K562 (cell line): ENCODE measurements at regions of chr2 and their contacts with region 1.

Region 1: GRCh38 chr2:156253765-156254164 is 78.8 kb downstream of the NR4A2 start:
- DNase-seq: no peak
- ATAC-seq: peak; percentile 88
- H3K4me3 ChIP-seq: peak overlapping the region; percentile 47
- H3K27ac ChIP-seq: peak overlapping the region; percentile 63; the same call in 1 of the 3 replicates
- H3K4me1 ChIP-seq: no peaks in the 10 kb centered on the region; a peak in 1 of 5 replicates
- H3K27me3 ChIP-seq: no peaks in the 10 kb centered on the region
- CTCF ChIP-seq: no peak
- EP300 ChIP-seq: no peak
- POLR2A ChIP-seq: no peak
- RAD21 ChIP-seq: no peak

Region 2: DNA sequence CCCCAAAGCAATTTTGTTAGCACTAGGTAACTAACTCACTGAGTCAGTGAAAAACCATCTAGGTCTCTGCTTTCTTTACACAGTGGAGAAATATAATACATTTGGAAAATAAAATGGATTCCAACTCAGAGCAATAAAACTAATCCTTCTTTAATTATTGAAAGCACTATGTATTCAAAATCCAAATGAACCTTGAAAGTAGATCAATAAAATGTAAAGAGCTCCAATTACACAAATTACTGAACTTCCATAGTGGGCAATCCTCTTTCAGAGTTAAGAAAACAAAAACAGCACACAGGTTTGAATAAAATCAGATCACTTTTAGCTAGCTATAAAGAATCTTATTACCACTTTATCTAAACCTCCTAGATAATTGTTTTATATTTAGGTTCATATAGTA is 129.3 kb before region 1 on chr2:
- CTCF ChIA-PET with region 1: no interaction called
- POLR2A ChIA-PET with region 1: no interaction called
- in situ Hi-C with region 1: no loop called
- intact Hi-C with region 1: no loop called
- DNase-seq: no peak
- ATAC-seq: no peak
- H3K4me3 ChIP-seq: no peak overlapping the region
- H3K27ac ChIP-seq: no peak overlapping the region
- H3K4me1 ChIP-seq: no peaks in the 10 kb centered on the region
- H3K27me3 ChIP-seq: no peaks in the 10 kb centered on the region
- CTCF ChIP-seq: no peak
- EP300 ChIP-seq: no peak
- POLR2A ChIP-seq: no peak
- RAD21 ChIP-seq: no peak

Region 3: DNA sequence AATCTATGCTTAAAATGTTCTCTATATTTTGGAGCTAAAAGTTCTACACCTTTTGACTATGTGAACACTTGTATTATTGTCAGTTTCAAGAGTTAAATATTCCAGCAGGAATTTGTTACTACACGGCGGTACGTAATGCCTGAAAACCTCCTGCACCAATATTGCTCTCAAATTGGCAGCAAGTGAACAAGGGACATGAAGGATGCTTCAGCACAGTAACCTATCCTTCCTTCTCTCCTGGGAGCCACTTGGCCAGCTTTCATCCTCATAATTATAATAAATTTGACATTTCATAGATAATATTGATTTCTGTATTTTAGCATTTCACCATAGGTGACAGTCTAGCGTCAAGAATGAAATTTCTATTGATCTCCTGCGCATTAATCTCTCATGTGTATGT is 118.9 kb before region 1 on chr2:
- CTCF ChIA-PET with region 1: no interaction called
- POLR2A ChIA-PET with region 1: no interaction called
- in situ Hi-C with region 1: no loop called
- intact Hi-C with region 1: no loop called
- DNase-seq: no peak
- ATAC-seq: no peak
- H3K4me3 ChIP-seq: no peak overlapping the region
- H3K27ac ChIP-seq: no peak overlapping the region
- H3K4me1 ChIP-seq: no peaks in the 10 kb centered on the region
- H3K27me3 ChIP-seq: no peaks in the 10 kb centered on the region
- CTCF ChIP-seq: no peak
- EP300 ChIP-seq: no peak
- POLR2A ChIP-seq: no peak
- RAD21 ChIP-seq: no peak

Region 4: DNA sequence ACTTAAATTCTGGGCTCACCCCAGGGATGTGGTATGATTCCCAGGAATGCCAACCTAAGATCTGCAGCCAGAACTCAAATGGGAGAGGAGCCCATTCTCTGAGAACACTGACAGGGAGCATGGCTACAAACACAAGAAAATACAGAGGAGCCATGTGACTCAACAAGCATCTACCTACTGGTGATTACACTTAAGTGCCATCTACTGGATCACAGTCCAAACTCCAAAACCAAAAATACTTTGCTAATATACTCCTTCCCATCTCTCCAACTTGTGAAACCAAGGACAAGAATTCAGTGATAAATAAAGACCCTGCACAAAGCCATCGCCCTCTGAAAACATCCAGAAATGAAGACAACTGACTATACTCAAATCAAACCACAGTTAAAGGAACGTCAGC is 38.1 kb before region 1 on chr2:
- CTCF ChIA-PET with region 1: no interaction called
- POLR2A ChIA-PET with region 1: no interaction called
- in situ Hi-C with region 1: no loop called
- intact Hi-C with region 1: loop called (anchors 2 kb)
- DNase-seq: no peak
- ATAC-seq: no peak
- H3K4me3 ChIP-seq: no peak overlapping the region
- H3K27ac ChIP-seq: no peak overlapping the region
- H3K4me1 ChIP-seq: peaks cover 0 to 2% of the 10 kb centered on the region in 2 experiments; a peak in 1 of 5 replicates
- H3K27me3 ChIP-seq: no peaks in the 10 kb centered on the region
- CTCF ChIP-seq: no peak
- EP300 ChIP-seq: no peak
- POLR2A ChIP-seq: no peak
- RAD21 ChIP-seq: 0 out of 4 replicates have a peak, but pooled peaks of 1 of the 2 experiments have one; percentile 10

Region 5: GRCh38 chr2:156309167-156309566 is 55.4 kb after region 1 on chr2:
- CTCF ChIA-PET with region 1: no interaction called
- POLR2A ChIA-PET with region 1: no interaction called
- in situ Hi-C with region 1: no loop called
- intact Hi-C with region 1: no loop called
- DNase-seq: no peak
- ATAC-seq: no peak
- H3K4me3 ChIP-seq: no peak overlapping the region
- H3K27ac ChIP-seq: no peak overlapping the region
- H3K4me1 ChIP-seq: no peaks in the 10 kb centered on the region
- H3K27me3 ChIP-seq: no peaks in the 10 kb centered on the region
- CTCF ChIP-seq: no peak
- EP300 ChIP-seq: no peak
- POLR2A ChIP-seq: no peak
- RAD21 ChIP-seq: no peak

Region 6: DNA sequence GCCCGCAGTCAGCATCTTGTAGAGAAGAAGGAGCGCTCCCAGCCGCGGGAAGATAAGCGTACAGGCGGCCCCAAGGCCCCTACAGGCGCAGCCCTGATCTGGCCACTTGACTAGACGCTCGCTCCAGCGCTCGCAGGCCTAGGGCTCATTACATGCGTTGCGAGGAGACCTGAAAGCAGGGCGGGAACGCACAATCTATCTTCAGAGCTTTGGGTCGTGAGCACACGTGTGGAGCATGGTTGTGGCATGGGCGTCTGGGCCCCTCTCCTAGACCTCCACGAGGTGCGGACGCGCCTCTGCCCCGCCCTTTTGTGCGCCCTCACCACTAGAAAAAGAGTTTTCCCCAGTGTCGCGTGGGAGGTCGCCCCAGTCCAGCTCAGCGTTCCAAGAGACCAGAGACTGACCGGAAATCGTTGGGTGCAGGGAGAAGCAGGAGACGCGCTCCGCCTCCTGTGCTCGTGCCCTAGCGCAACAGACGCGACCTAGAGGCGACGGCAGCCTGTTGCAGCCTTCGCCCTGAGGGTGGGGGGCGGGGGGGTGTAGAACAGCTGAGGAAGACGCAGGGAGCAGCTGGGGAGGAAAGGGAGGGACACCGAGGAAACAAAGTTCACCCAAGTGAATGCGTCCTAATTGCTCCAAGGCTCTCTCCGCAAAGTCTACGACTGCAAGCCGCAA is 66.2 kb after region 1 on chr2:
- CTCF ChIA-PET with region 1: no interaction called
- POLR2A ChIA-PET with region 1: no interaction called
- in situ Hi-C with region 1: no loop called
- intact Hi-C with region 1: no loop called
- DNase-seq: peak; percentile 48 to 77 (median 56)
- ATAC-seq: peak; percentile 90
- H3K4me3 ChIP-seq: peak overlapping the region; percentile 20
- H3K27ac ChIP-seq: peak overlapping the region; percentile 61
- H3K4me1 ChIP-seq: peaks cover 0 to 12% of the 10 kb centered on the region in 2 experiments; a peak in 2 of 5 replicates
- H3K27me3 ChIP-seq: no peaks in the 10 kb centered on the region
- CTCF ChIP-seq: peak in 2 of 3 experiments; percentile 14 to 27; a peak in 2 of 6 replicates
- EP300 ChIP-seq: no peak
- POLR2A ChIP-seq: peak; percentile 60
- RAD21 ChIP-seq: no peak